ENCODE measurements at regions of chr10 and their contacts with region 1.

Region 1: DNA sequence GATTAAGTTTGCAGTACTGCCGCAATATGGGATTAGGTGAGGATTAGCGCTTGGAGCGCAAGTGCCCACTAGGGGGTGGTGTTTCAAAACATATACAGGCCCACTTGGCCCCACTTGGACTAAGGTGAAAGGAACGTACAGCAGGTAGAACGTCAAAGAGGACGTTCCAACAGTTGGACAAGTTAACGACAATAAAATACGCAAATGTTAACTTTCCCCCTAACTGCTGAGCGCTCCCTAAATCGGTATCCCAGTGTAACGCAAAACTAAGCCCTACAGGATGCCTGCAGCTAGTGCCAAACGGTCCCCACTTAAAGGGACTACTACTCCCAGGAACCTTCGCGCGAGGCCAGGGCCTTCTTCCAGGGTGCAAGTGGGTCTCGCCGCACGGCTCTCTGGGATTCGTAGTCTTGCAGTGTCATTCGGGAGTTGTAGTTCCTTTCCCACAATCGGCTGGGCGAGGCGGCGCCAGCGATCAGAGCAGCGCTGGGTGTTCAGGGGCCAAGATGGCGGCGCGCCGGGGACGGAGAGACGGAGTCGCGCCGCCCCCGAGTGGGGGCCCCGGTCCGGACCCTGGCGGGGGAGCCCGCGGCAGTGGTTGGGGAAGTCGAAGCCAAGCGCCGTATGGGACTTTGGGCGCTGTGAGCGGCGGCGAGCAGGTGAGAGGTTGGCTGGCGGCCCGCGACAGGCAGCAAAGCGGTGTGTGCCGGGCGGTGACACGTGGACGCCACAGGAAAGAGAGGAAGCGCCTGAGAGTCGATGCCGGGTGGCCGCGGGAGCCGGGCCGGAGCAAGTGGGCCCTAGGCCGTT is at the start of gene PPRC1:
- DNase-seq: peak; percentile 98
- ATAC-seq: peak; percentile 94
- H3K4me3 ChIP-seq: peak within 1 kb of the TSS; percentile 70 to 97 (median 82)
- H3K4me3 Mint-ChIP-seq: peak within 1 kb of the TSS; percentile 94
- H3K27ac ChIP-seq: peak within 1 kb of the TSS; percentile 79 to 88
- H3K27ac Mint-ChIP-seq: peak within 1 kb of the TSS; percentile 94
- H3K4me1 ChIP-seq: peaks cover 18 to 25% of the 10 kb centered on the region in 2 donors
- H3K4me1 Mint-ChIP-seq: peaks cover 36% of the 10 kb centered on the region
- H3K27me3 ChIP-seq: no peaks in the 10 kb centered on the region
- H3K27me3 Mint-ChIP-seq: no peaks in the 10 kb centered on the region
- CTCF ChIP-seq: peak; percentile 96
- total RNA-seq, gene PPRC1: 35.3 and 36.3 TPM in 2 replicates

Region 2: DNA sequence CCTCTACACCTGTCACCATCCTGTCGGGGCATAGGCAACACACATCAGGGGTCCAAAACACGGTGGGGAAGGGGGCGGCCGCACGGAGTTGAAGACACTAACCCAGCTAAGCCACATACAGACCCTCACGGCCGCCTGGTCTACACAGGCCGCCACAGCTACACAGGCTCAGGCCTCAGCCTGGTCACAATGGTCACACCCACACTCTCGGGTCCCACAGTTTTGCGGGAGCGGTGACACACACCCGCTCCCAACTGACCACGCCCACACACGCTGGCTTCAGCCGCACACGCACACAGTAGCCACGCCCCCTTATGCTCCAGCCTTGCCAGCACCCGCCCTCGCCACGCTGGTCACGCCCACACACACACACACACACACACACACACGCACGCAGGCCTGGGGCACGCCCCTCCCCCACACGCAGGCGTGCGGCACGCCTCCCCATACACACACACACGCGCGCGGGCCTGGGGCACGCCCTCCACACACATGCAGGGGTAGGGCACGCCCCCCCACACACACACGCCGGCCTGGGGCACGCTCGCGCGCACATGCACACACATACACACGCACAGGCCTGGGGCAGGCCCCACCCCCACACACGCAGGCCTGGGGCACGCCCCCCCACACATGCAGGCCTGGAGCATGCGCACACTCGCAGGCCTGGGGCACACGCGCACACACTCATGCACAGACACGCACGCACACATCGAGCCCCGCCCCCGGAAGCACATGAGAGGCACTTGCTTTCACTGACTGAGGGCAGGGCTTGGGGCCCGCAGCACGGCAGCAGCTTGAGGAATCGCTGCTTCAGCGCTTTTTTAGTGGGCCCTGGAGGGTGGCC is 302.2 kb before region 1 on chr10:
- CTCF ChIA-PET with region 1: no interaction called
- POLR2A ChIA-PET with region 1: no interaction called
- intact Hi-C with region 1: loop called (anchors 1 kb)
- DNase-seq: peak; percentile 99
- ATAC-seq: peak; percentile 73
- H3K4me3 ChIP-seq: peak overlapping the region; percentile 3 to 72 (median 58)
- H3K4me3 Mint-ChIP-seq: peak overlapping the region; percentile 94
- H3K27ac ChIP-seq: peak overlapping the region; percentile 89 to 96
- H3K27ac Mint-ChIP-seq: peak overlapping the region; percentile 99
- H3K4me1 ChIP-seq: peaks cover 35 to 58% of the 10 kb centered on the region in 2 donors
- H3K4me1 Mint-ChIP-seq: peaks cover 45% of the 10 kb centered on the region
- H3K27me3 ChIP-seq: no peaks in the 10 kb centered on the region
- H3K27me3 Mint-ChIP-seq: no peaks in the 10 kb centered on the region
- CTCF ChIP-seq: no peak

Region 3: GRCh38 chr10:102064868-102065560 is 67.8 kb before region 1 on chr10 and contains the start of gene HPS6:
- CTCF ChIA-PET with region 1: interaction called, 3 read pairs
- POLR2A ChIA-PET with region 1: no interaction called
- intact Hi-C with region 1: loop called (anchors 1 kb)
- DNase-seq: peak; percentile 90
- ATAC-seq: peak; percentile 98
- H3K4me3 ChIP-seq: peak within 1 kb of the TSS; percentile 51 to 89 (median 73)
- H3K4me3 Mint-ChIP-seq: peak within 1 kb of the TSS; percentile 92
- H3K27ac ChIP-seq: peak within 1 kb of the TSS; percentile 63 to 90
- H3K27ac Mint-ChIP-seq: peak within 1 kb of the TSS; percentile 92
- H3K4me1 ChIP-seq: peaks cover 15 to 20% of the 10 kb centered on the region in 2 donors
- H3K4me1 Mint-ChIP-seq: peaks cover 23% of the 10 kb centered on the region
- H3K27me3 ChIP-seq: no peaks in the 10 kb centered on the region
- H3K27me3 Mint-ChIP-seq: no peaks in the 10 kb centered on the region
- CTCF ChIP-seq: no peak
- total RNA-seq, gene HPS6: 28.6 and 29.5 TPM in 2 replicates

Region 4: GRCh38 chr10:102120142-102120990 is 12.4 kb before region 1 on chr10 and contains the start of gene LDB1:
- CTCF ChIA-PET with region 1: interaction called, 14 read pairs
- POLR2A ChIA-PET with region 1: interaction called, 4 read pairs
- intact Hi-C with region 1: loop called (anchors 1 kb)
- DNase-seq: peak; percentile 89
- ATAC-seq: peak; percentile 61
- H3K4me3 ChIP-seq: peak within 1 kb of the TSS; percentile 71 to 95 (median 90)
- H3K4me3 Mint-ChIP-seq: peak within 1 kb of the TSS; percentile 97
- H3K27ac ChIP-seq: peak within 1 kb of the TSS; percentile 87 to 94
- H3K27ac Mint-ChIP-seq: peak within 1 kb of the TSS; percentile 99
- H3K4me1 ChIP-seq: peaks cover 45 to 55% of the 10 kb centered on the region in 2 donors
- H3K4me1 Mint-ChIP-seq: peaks cover 55% of the 10 kb centered on the region
- H3K27me3 ChIP-seq: no peaks in the 10 kb centered on the region
- H3K27me3 Mint-ChIP-seq: no peaks in the 10 kb centered on the region
- CTCF ChIP-seq: no peak
- total RNA-seq, gene LDB1: 111 and 114 TPM in 2 replicates